Activated CD4-positive, alpha-beta T cell treated with anti-CD3 and anti-CD28 coated beads, Interleukin-2, amount 10 ng/mL, durations not matched to agents 24 days and 14 days (primary cell): ENCODE measurements at regions of chr16 and their contacts with region 1.

Region 1: GRCh38 chr16:1942810-1943726 is at the start of gene MSRB1:
- DNase-seq: peak; percentile 100
- H3K4me3 Mint-ChIP-seq: peak within 1 kb of the TSS; percentile 90
- H3K27ac Mint-ChIP-seq: peak within 1 kb of the TSS; percentile 88
- H3K4me1 Mint-ChIP-seq: peaks cover 21% of the 10 kb centered on the region
- H3K27me3 Mint-ChIP-seq: peaks cover 3% of the 10 kb centered on the region
- total RNA-seq, gene MSRB1: 22.8 and 23.0 TPM in 2 replicates

Region 2: DNA sequence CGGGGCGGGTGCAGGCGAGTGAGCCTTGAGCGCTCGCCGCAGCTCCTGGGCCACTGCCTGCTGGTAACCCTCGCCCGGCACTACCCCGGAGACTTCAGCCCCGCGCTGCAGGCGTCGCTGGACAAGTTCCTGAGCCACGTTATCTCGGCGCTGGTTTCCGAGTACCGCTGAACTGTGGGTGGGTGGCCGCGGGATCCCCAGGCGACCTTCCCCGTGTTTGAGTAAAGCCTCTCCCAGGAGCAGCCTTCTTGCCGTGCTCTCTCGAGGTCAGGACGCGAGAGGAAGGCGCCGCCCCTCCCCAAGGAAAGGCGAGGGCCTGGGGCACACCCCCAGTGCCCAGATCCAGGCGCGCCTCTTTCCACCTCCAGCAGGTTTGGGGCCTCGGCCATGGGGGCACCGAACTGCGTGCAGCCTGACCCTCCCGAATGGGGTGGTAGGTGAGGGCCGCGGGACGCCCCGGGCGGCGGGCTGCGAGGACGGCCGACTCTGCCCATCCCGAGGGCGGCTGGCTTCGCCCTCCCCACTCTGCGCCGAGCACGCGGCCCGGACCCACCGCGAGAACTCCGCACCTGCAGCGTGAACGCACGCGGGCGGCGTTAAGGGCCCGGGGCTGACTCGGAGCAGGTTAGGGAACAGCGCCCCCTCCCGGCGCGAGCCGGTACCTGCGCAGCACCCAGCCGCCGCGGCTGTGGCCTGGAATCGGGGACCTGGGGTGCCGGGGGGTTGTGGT is 1762.0 kb before region 1 on chr16:
- intact Hi-C with region 1: no loop called
- DNase-seq: peak; percentile 96
- H3K4me3 Mint-ChIP-seq: peak overlapping the region; percentile 40
- H3K27ac Mint-ChIP-seq: no peak overlapping the region
- H3K4me1 Mint-ChIP-seq: no peaks in the 10 kb centered on the region
- H3K27me3 Mint-ChIP-seq: peaks cover 25% of the 10 kb centered on the region

Region 3: GRCh38 chr16:901715-902601 is 1041.1 kb before region 1 on chr16:
- intact Hi-C with region 1: no loop called
- DNase-seq: no peak
- H3K4me3 Mint-ChIP-seq: no peak overlapping the region
- H3K27ac Mint-ChIP-seq: no peak overlapping the region
- H3K4me1 Mint-ChIP-seq: no peaks in the 10 kb centered on the region
- H3K27me3 Mint-ChIP-seq: no peaks in the 10 kb centered on the region

Region 4: GRCh38 chr16:1511662-1512575 is 431.1 kb before region 1 on chr16:
- intact Hi-C with region 1: no loop called
- DNase-seq: no peak
- H3K4me3 Mint-ChIP-seq: no peak overlapping the region
- H3K27ac Mint-ChIP-seq: peak overlapping the region; percentile 37
- H3K4me1 Mint-ChIP-seq: no peaks in the 10 kb centered on the region
- H3K27me3 Mint-ChIP-seq: no peaks in the 10 kb centered on the region

Region 5: DNA sequence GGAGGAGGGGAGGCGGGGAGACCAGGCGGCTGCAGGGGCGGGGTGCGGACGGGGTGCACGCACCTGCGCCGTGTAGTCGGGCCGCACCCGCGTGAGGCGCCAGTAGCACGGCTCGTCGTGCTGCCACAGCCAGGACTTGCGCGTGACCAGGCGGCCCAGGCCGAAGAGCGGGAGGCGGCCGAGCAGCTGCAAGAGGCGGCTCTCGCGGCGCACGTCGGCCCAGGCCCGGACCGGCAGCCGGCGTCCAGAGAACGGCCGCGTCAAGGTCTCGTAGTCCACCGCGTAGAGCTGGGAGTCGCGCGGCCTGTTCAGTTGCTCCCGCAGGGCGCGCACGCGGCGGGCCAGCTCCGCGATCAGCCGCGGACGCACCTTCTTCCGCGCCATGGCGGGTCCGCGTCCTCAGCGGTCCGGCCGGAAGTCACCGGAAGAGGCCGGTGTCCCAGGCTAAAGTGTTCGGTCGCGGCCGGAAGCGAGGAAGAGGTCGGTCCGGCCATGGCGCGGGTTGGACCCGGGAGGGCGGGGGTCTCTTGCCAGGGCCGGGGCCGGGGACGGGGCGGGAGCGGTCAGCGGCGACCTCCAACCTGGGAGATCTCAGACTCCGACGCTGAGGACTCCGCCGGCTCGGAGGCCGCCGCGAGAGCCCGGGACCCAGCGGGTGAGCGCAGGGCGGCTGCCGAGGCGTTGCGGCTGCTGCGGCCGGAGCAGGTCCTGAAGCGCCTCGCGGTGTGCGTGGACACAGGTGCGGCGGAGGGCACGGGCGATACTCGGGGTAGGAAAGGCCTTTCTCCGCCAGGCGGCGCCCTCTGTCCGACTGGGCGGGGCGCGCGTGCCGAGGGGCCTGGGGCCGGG is 170.1 kb before region 1 on chr16 and contains the starts of genes EME2 and MRPS34:
- intact Hi-C with region 1: loop called (anchors 5 kb)
- DNase-seq: peak; percentile 96
- H3K4me3 Mint-ChIP-seq: peak within 1 kb of the TSS; percentile 93
- H3K27ac Mint-ChIP-seq: peak within 1 kb of the TSS; percentile 95
- H3K4me1 Mint-ChIP-seq: peaks cover 10% of the 10 kb centered on the region
- H3K27me3 Mint-ChIP-seq: no peaks in the 10 kb centered on the region
- total RNA-seq, gene EME2: 28.2 and 30.0 TPM in 2 replicates
- total RNA-seq, gene MRPS34: 201 and 207 TPM in 2 replicates

Region 6: DNA sequence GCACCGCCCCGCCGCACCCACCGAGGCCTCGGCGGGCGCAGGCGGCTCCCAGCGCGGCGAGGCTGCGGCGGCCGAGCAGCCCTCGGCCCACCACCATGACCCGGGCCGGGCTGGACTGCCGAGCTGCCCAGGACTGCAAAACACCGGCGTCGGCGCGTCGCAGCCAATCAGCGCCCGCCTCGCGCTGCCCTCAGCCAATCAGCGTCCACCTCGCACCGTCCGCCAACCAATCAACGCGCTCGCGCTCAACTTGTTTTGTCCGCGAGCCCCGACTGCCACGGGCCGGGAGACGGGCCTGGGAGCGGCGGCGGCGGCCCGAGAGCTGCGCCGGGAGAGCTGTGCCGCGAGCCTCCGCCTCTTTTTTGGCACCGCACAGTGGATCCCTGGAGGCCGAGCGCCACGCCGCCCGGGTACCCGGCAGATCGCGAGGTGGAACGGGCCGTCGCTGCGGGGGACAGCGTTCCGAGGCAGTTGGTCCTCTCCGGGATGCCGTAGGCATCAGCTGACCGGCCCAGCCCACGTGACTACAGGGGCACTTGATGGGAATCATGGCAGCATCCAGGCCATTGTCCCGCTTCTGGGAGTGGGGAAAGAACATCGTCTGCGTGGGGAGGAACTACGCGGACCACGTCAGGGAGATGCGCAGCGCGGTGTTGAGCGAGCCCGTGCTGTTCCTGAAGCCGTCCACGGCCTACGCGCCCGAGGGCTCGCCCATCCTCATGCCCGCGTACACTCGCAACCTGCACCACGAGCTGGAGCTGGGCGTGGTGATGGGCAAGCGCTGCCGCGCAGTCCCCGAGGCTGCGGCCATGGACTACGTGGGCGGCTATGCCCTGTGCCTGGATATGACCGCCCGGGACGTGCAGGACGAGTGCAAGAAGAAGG is 116.1 kb before region 1 on chr16 and contains the starts of genes FAHD1 and HAGH:
- intact Hi-C with region 1: no loop called
- DNase-seq: peak; percentile 98
- H3K4me3 Mint-ChIP-seq: peak within 1 kb of the TSS; percentile 97
- H3K27ac Mint-ChIP-seq: peak within 1 kb of the TSS; percentile 89
- H3K4me1 Mint-ChIP-seq: peaks cover 25% of the 10 kb centered on the region
- H3K27me3 Mint-ChIP-seq: no peaks in the 10 kb centered on the region
- total RNA-seq, gene FAHD1: 20.2 and 21.7 TPM in 2 replicates
- total RNA-seq, gene HAGH: 50.3 and 57.7 TPM in 2 replicates

Region 7: GRCh38 chr16:1863681-1864460 is 79.2 kb before region 1 on chr16:
- intact Hi-C with region 1: loop called (anchors 5 kb)
- DNase-seq: no peak
- H3K4me3 Mint-ChIP-seq: no peak overlapping the region
- H3K27ac Mint-ChIP-seq: no peak overlapping the region
- H3K4me1 Mint-ChIP-seq: no peaks in the 10 kb centered on the region
- H3K27me3 Mint-ChIP-seq: peaks cover 28% of the 10 kb centered on the region

Region 8: GRCh38 chr16:1929578-1930337 is 13.3 kb before region 1 on chr16:
- intact Hi-C with region 1: loop called (anchors 1 kb)
- DNase-seq: peak; percentile 99
- H3K4me3 Mint-ChIP-seq: peak overlapping the region; percentile 67
- H3K27ac Mint-ChIP-seq: no peak overlapping the region
- H3K4me1 Mint-ChIP-seq: peaks cover 2% of the 10 kb centered on the region
- H3K27me3 Mint-ChIP-seq: peaks cover 1% of the 10 kb centered on the region

Region 9: GRCh38 chr16:1959269-1960049 is 16.4 kb after region 1 on chr16 and contains the start of gene NDUFB10:
- intact Hi-C with region 1: loop called (anchors 1 kb)
- DNase-seq: peak; percentile 99
- H3K4me3 Mint-ChIP-seq: peak within 1 kb of the TSS; percentile 99
- H3K27ac Mint-ChIP-seq: peak within 1 kb of the TSS; percentile 96
- H3K4me1 Mint-ChIP-seq: peaks cover 30% of the 10 kb centered on the region
- H3K27me3 Mint-ChIP-seq: no peaks in the 10 kb centered on the region
- total RNA-seq, gene NDUFB10: 136 and 141 TPM in 2 replicates

Region 10: DNA sequence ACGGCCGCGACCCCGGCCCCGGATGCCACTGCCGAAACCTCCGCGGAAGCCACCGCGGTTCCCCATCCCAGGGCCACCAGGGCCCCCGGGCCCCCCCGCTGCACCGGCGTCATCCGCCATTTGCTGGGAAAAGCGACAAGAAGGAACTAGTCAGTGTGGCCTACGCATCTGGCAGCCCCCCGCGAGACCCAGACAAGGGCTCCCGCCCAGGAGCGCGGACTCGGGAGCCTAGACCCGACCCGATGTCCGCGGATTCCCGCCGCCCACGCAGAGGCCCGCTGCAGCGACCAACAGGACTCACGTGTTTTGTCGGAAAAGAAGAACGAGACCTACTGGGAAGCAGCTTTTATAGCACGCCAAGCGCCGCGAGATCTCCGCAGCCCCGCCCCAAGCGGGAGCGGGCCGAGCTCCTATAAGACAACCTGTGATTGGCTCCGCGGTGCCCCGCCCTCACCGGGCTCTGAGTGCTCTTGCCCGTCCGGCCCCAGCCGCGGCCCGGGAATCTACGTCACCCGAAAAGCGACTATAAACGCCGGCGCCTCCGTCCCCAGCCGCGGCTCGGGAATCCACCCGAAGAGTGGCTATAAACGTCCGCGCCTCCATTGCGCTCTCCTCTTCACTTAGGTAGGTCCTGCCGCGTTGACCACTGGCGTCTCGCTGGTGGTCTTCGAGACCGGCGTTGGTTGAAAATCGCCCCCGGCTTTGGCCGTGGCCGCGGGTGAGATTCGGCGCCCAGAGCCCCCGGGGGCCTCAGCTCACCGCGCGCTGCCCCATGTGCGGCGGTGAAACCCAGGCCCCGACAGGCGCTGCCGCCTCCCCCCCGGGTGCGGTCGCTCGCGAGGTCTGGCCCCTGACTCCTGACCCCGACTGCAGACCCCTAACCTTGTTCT is 21.7 kb after region 1 on chr16 and contains the start of gene RPS2:
- intact Hi-C with region 1: loop called (anchors 1 kb)
- DNase-seq: peak; percentile 100
- H3K4me3 Mint-ChIP-seq: peak within 1 kb of the TSS; percentile 99
- H3K27ac Mint-ChIP-seq: peak within 1 kb of the TSS; percentile 97
- H3K4me1 Mint-ChIP-seq: peaks cover 31% of the 10 kb centered on the region
- H3K27me3 Mint-ChIP-seq: no peaks in the 10 kb centered on the region
- total RNA-seq, gene RPS2: 3,359 and 3,401 TPM in 2 replicates